Cardiac septum (tissue), 1 donor: ENCODE measurements at regions of chr5 and their contacts with region 1.

Region 1: GRCh38 chr5:150758531-150759333 is at the start of gene DCTN4:
- DNase-seq: peak; percentile 98
- total RNA-seq, gene DCTN4: 44.9 TPM

Region 2: DNA sequence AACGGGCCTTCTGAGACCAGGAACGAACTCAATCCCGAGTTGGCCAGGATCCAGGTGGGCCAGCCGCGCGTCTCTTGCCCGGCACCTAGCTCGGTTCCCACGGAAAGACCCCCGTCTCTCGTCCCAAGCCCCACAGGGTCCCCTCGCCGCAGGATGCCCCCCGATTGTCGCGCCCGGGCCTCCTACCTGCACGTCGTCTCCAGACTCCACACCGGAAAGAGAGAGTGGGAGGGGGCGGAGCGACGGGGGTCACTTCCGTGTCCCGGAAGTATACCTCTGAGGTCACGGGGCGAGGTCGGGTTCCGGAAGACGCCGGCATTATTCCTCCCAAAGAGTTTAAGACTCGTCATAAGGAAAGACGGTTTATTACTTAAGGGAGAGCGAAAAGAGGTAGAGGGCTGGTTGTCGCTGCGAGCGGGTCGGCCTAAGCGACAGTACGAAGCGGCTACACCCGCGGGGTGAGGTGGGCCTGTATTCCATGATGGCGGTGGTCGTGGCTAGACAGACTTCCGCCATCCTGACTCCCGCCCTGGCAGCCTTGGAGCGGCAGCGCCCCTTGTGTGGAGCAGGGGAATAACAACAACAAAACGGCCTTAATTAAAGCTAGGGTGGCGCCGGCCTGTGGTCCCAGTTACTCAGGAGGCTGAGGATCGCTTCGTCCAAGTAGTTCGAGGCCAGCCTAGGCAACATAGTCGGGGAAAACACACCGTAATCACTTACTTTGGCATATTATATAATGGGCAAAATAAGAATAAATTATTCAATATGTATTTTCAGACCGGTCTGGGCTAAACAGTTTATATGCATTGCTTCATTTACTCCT is 309.0 kb before region 1 on chr5 and contains the start of gene RPS14:
- intact Hi-C with region 1: loop called (anchors 5 kb)
- DNase-seq: peak; percentile 96
- total RNA-seq, gene RPS14: 852 TPM

Region 3: DNA sequence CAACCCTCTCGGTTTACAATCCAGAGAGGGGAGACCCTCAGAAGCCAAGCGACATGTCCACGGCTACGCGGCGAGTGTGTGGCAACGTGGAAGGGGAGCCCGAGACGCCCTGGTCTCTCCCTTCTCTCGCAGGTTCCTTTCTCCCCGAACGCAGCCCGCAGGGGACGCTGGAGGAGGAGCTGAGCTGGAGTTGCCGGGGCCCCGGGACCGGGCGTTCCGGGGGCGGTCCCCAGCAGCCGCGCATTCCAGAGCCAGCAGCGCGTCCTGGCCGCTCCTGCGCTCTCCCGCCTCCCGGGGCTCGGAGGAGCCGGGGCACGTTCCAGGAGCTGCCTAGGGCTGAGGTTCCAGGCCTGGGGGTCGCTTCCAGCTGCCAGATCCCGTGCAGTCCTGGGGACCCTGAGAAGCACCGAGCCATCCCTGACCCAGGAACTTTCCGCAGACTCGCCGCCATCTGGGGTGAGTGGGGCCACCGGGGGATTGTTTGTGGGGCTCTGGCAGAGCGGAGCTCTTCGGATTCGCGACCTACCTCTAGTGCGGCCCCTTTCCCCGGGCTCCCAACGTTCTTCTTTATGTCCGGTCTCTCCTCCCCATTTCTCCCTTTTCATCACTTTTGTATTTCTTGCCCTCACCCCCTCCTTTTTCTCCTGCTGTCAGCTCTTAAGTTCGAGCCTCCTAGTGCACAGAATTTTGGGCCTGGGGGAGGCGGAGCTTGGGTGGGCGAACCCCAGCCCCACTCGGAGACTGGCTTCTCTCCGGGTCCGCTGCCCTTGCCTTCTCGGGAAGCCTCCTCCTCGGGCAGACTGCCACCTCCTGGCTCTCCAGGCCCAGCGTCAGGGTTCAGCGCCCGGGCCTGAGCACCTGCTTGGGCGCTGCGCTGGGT is 20.0 kb after region 1 on chr5 and contains the start of gene SMIM3:
- intact Hi-C with region 1: loop called (anchors 2 kb)
- DNase-seq: peak; percentile 93
- total RNA-seq, gene SMIM3: 15.3 TPM

Region 4: GRCh38 chr5:150879358-150879757 is 120.6 kb after region 1 on chr5:
- intact Hi-C with region 1: no loop called
- DNase-seq: no peak

Region 5: GRCh38 chr5:151002250-151002649 is 243.5 kb after region 1 on chr5:
- intact Hi-C with region 1: no loop called
- DNase-seq: no peak